T-cell (primary cell): ENCODE measurements at regions of chr11 and their contacts with region 1.

Region 1: GRCh38 chr11:77710358-77710757 is 72.8 kb upstream of the CLNS1A start:
- DNase-seq: no peak
- ATAC-seq: no peak
- H3K4me3 ChIP-seq: no peak overlapping the region
- H3K4me3 Mint-ChIP-seq: no peak overlapping the region
- H3K27ac ChIP-seq: no peak overlapping the region
- H3K27ac Mint-ChIP-seq: peak overlapping the region in 1 of 2 donors; percentile 24
- H3K4me1 ChIP-seq: peaks cover 0 to 4% of the 10 kb centered on the region in 2 experiments
- H3K4me1 Mint-ChIP-seq: peaks cover 38 to 46% (median 43%) of the 10 kb centered on the region in 3 donors
- H3K27me3 ChIP-seq: no peaks in the 10 kb centered on the region
- H3K27me3 Mint-ChIP-seq: no peaks in the 10 kb centered on the region

Region 2: GRCh38 chr11:77677138-77677537 is 33.2 kb before region 1 on chr11:
- CTCF ChIA-PET with region 1: no interaction called
- POLR2A ChIA-PET with region 1: interaction called in 1 of 2 experiments, 15 read pairs
- DNase-seq: no peak
- ATAC-seq: no peak
- H3K4me3 ChIP-seq: no peak overlapping the region
- H3K4me3 Mint-ChIP-seq: no peak overlapping the region
- H3K27ac ChIP-seq: no peak overlapping the region
- H3K27ac Mint-ChIP-seq: no peak overlapping the region
- H3K4me1 ChIP-seq: no peaks in the 10 kb centered on the region
- H3K4me1 Mint-ChIP-seq: no peaks in the 10 kb centered on the region
- H3K27me3 ChIP-seq: no peaks in the 10 kb centered on the region
- H3K27me3 Mint-ChIP-seq: no peaks in the 10 kb centered on the region

Region 3: GRCh38 chr11:77762426-77762825 is 52.1 kb after region 1 on chr11:
- CTCF ChIA-PET with region 1: interaction called in 1 of 2 experiments, 7 read pairs
- POLR2A ChIA-PET with region 1: interaction called in 1 of 2 experiments, 14 read pairs
- DNase-seq: no peak
- ATAC-seq: no peak
- H3K4me3 ChIP-seq: no peak overlapping the region
- H3K4me3 Mint-ChIP-seq: no peak overlapping the region
- H3K27ac ChIP-seq: no peak overlapping the region
- H3K27ac Mint-ChIP-seq: no peak overlapping the region
- H3K4me1 ChIP-seq: no peaks in the 10 kb centered on the region
- H3K4me1 Mint-ChIP-seq: peaks cover 24 to 49% (median 36%) of the 10 kb centered on the region in 3 donors
- H3K27me3 ChIP-seq: no peaks in the 10 kb centered on the region
- H3K27me3 Mint-ChIP-seq: no peaks in the 10 kb centered on the region

Region 4: DNA sequence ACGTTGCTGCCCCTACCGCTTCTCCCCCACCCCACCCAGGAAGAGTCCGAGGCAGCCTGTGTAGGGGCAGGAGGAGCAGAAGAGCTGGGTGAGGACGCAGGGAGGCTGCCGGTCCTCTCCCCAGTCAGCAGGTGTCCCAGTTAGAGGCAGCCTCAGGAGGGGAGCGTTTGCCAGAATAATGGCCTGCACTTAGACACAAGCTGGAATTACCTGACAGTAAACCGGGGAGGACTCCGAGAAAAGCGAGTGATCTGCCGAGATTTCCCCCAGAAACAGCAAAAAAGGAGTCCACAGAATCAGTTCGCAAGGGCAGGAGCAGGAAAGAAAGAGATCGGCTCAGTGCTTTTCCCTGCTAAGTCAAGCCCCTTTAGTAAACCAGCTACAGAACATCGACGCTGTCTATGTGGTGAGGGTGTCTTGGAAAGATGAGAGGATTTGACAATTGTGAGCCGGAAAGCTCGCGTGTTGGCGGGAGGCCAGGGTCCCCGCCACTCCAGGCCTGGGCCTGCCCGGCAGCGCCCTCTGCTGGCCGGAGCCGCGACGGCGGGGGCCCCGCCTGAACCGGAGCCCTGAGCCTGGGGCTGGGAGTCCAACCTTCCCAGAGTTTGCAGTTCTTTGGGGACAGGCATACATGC is 335.6 kb after region 1 on chr11:
- CTCF ChIA-PET with region 1: interaction called in 1 of 2 experiments, 10 read pairs
- POLR2A ChIA-PET with region 1: no interaction called
- DNase-seq: peak; percentile 38 to 85 (median 73)
- ATAC-seq: peak; percentile 92 to 98 (median 96)
- H3K4me3 ChIP-seq: peak overlapping the region in 1 of 2 donors; percentile 1
- H3K4me3 Mint-ChIP-seq: peak overlapping the region; percentile 49 to 63 (median 53)
- H3K27ac ChIP-seq: no peak overlapping the region
- H3K27ac Mint-ChIP-seq: no peak overlapping the region
- H3K4me1 ChIP-seq: peaks cover 3 to 9% of the 10 kb centered on the region in 2 experiments
- H3K4me1 Mint-ChIP-seq: peaks cover 6 to 12% (median 10%) of the 10 kb centered on the region in 3 donors
- H3K27me3 ChIP-seq: no peaks in the 10 kb centered on the region
- H3K27me3 Mint-ChIP-seq: no peaks in the 10 kb centered on the region